ENCODE measurements at regions of chr1 and their contacts with region 1.

Region 1: GRCh38 chr1:192609110-192610079 is 26.6 kb upstream of the RGS13 start:
- DNase-seq: peak; percentile 53
- ATAC-seq: peak; percentile 72 to 85

Region 2: GRCh38 chr1:192477630-192478029 is 131.8 kb before region 1 on chr1:
- intact Hi-C with region 1: loop called (anchors 5 to 10 kb)
- DNase-seq: no peak
- ATAC-seq: peak; percentile 76 to 77

Region 3: GRCh38 chr1:192489748-192490147 is 119.6 kb before region 1 on chr1:
- intact Hi-C with region 1: loop called in 1 of 2 experiments (anchors 10 kb)
- DNase-seq: peak; percentile 51
- ATAC-seq: peak; percentile 75 to 93

Region 4: DNA sequence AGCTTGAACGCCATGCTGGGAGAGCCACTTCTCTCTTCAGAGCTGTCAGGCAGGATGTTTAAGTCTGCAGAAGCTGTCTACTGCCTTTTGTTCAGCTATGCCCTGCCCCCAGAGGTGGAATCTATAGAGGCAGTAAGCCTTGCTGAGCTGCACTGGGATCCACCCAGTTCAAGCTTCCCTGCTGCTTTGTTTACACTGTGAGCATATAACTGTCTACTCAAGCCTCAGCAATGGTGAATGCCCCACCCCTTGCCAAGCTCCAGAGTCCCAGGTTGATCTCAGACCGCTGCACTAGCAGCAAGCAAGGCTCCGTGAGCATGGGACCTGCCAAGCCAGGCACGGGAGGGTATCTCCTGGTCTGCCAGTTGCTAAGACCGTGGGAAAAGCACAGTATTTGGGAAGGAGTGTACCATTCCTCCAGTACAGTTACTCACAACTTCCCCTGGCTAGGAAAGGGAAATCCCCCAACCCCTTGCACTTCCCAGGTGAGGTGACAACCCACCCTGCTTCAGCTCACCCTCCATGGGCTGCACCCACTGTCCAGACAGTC is 59.1 kb after region 1 on chr1:
- intact Hi-C with region 1: no loop called
- DNase-seq: no peak
- ATAC-seq: no peak

Region 5: DNA sequence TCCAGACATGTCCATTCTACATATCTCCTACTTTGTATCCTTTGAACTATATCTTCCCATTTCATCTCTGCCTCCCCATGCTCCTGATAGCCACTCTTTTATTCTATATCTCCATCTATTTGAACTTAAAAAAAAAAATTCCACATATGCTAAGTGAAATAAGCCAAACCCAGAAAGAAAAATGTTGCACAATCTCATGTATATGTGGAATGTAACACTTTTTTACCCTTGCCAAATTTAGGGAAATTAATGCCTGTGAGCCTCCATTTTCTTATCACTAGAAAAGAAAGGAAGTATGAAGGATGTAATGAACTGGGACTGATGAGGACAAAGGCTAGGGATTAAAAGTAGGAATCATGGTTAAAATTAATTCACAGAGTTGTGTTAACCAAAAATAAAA is 80.1 kb after region 1 on chr1:
- intact Hi-C with region 1: no loop called
- DNase-seq: no peak
- ATAC-seq: no peak

Region 6: DNA sequence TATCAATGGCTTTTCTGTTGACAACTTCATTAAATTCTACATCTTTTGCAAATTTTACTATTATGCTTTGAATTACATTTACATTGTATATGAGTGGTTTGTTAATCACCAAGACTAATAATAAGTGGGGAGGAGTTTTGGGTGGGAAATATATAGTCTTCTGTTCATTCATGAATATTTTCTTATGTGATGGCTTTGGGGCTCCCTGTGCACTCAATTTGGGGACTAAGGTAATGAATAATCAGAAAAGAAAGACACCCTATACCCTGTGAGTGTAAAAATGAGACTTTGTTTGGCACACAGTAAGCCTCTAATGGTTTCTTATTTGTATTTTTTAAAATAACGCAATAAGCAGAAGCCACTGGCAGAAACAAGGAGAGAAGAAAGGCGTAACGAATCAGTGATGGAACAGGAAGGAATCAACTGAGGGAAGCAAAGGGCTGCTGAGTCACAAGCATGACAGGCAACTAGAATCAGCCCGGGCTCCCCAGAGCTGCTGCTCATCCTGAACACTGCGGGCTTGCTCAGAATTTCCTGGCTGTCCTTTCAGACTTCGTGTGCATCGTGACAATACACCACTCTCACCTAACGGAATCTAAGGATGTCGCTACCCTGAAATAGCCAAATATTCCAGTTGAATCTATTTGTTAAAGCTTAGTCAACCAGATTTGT is 178.7 kb after region 1 on chr1:
- intact Hi-C with region 1: no loop called
- DNase-seq: peak; percentile 55
- ATAC-seq: peak; percentile 57 to 81

Region 7: DNA sequence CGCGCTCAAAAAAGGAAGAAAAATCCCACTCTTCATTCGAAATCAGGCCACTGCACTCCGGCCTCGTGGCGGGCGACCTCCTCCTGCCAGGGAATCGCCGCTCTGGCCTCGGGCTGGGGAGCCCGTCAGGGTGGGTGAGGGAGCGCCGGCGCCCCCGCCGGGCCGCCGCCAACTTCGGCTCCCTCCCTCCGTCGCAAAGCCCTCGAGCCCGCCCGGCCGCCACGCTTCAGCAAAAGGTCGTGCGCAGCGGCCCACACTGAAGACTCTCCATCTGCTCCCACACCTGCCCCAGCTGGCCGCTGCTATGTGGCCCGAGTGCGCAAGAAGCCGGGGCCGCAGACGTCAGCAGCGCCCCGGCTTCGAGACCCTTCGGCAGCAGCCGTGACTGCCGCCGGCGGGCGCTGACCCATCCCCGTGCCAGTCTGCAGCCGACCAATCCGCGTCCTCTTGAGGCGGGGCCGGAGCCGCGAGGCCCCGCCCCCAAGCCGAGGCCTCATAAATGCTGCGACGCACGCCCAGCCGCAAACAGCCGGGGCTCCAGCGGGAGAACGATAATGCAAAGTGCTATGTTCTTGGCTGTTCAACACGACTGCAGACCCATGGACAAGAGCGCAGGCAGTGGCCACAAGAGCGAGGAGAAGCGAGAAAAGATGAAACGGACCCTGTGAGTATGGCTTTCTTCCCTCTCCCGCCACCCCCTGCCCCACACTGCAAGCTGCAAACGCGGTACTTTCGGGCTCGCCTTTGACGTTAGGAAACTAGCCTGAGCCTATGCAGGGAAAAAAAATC is 199.3 kb after region 1 on chr1 and contains the start of gene RGS2:
- intact Hi-C with region 1: loop called in 1 of 2 experiments (anchors 10 kb)
- DNase-seq: peak; percentile 93
- ATAC-seq: peak; percentile 98
- total RNA-seq, gene RGS2: 33.1 to 89.7 TPM

Region 8: GRCh38 chr1:193013005-193013404 is 403.6 kb after region 1 on chr1:
- intact Hi-C with region 1: loop called in 1 of 2 experiments (anchors 5 kb)
- DNase-seq: no peak
- ATAC-seq: peak; percentile 30 to 74

Measured in left cardiac atrium (tissue), 4 donors.